GM23248 (cell line): ENCODE measurements at regions of chr4 and their contacts with region 1.

Region 1: DNA sequence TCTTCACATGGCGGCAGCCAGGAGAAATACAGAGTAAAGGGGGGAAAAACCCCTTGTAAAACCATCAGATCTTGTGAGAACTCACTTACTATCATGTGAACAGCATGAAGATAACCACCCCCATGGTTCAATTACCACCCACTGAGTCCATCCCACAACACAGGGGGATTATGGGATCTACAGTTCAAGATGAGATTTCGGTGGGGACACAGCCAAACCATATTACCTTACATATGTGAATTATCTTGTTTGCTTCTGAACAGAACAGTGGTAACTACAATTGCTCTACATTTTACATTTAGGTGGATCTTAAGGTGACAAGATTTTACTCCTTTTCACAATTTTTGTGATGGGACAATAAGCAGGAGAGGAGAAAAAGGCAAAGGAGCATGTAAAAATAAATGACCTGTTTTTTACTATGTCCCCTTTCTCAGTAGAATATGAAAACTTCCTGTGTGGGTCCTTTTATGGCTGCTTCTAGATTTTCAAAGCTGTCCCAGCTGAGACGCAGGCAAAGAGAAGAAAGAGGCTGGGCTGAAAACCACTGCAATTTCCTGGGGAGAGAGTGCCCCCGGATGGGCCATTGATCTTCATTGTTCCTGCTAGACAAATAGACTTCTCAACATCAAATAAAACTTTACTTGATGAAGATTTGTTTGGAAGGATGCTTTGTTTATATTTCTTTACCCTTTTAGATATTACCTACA is 45.9 kb upstream of the PGM2 start:
- DNase-seq: peak; percentile 19
- H3K4me3 ChIP-seq: no peak overlapping the region
- H3K27ac ChIP-seq: no peak overlapping the region
- H3K4me1 ChIP-seq: no peaks in the 10 kb centered on the region
- H3K27me3 ChIP-seq: no peaks in the 10 kb centered on the region; the same call in 1 of the 2 replicates

Region 2: DNA sequence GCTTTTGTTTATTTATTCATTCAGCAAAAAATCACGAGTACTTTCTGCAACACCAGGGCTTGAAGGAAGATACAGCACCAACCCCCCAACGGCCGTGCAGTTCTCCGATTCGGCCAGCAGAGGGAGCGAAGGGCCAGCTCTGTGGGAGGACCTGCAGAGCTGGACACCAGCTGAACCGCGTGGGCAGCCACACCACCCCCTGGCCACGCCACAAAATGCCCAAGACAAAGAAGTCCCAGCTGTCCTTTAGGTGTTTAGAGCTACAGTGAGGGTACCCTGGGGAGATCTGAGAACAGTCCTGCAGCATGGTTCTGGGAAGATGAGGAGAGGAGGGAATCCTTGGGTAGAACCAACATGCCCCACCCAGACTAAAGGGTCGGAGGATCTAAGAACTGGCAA is 177.5 kb before region 1 on chr4:
- in situ Hi-C with region 1: loop called (anchors 10 kb)
- DNase-seq: peak; percentile 71
- H3K4me3 ChIP-seq: no peak overlapping the region
- H3K27ac ChIP-seq: no peak overlapping the region
- H3K4me1 ChIP-seq: peaks cover 10% of the 10 kb centered on the region
- H3K27me3 ChIP-seq: no peaks in the 10 kb centered on the region